MCF 10A (cell line): ENCODE measurements at regions of chr1 and their contacts with region 1.

Region 1: GRCh38 chr1:206725109-206725963 is 40.6 kb downstream of the MAPKAPK2 start:
- DNase-seq: peak; percentile 78
- H3K4me3 Mint-ChIP-seq: no peak overlapping the region
- H3K27ac Mint-ChIP-seq: no peak overlapping the region
- H3K4me1 Mint-ChIP-seq: peaks cover 57% of the 10 kb centered on the region
- H3K27me3 Mint-ChIP-seq: no peaks in the 10 kb centered on the region
- CTCF ChIP-seq: peak; percentile 54

Region 2: GRCh38 chr1:206674745-206675175 is 50.6 kb before region 1 on chr1:
- CTCF ChIA-PET with region 1: interaction called, 47 read pairs
- POLR2A ChIA-PET with region 1: interaction called, 8 read pairs
- intact Hi-C with region 1: no loop called
- DNase-seq: peak; percentile 100
- H3K4me3 Mint-ChIP-seq: peak overlapping the region; percentile 48
- H3K27ac Mint-ChIP-seq: no peak overlapping the region
- H3K4me1 Mint-ChIP-seq: peaks cover 18% of the 10 kb centered on the region
- H3K27me3 Mint-ChIP-seq: no peaks in the 10 kb centered on the region
- CTCF ChIP-seq: no peak

Region 3: DNA sequence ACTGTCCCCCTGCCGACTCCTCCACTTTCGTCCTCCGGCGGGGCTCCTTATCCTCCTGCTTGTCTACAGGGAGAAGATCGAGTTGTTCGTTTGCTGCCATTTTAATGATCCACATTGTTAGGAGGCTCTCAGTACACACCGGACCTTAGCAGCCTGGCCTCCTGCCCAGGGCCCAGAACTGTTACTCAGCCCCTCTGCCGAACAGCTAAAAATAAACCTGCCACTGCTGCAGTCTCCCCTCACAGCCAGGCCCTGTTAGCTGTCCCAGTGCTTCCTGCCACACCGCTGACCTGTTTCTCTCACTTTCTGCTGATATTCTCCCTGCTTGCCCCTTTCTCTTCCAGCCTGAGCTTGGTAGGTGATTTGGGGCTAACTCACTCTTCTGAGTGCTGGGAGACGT is 32.3 kb before region 1 on chr1:
- CTCF ChIA-PET with region 1: interaction called, 79 read pairs
- POLR2A ChIA-PET with region 1: interaction called, 20 read pairs
- intact Hi-C with region 1: no loop called
- DNase-seq: no peak
- H3K4me3 Mint-ChIP-seq: no peak overlapping the region
- H3K27ac Mint-ChIP-seq: no peak overlapping the region
- H3K4me1 Mint-ChIP-seq: peaks cover 56% of the 10 kb centered on the region
- H3K27me3 Mint-ChIP-seq: no peaks in the 10 kb centered on the region
- CTCF ChIP-seq: no peak

Region 4: DNA sequence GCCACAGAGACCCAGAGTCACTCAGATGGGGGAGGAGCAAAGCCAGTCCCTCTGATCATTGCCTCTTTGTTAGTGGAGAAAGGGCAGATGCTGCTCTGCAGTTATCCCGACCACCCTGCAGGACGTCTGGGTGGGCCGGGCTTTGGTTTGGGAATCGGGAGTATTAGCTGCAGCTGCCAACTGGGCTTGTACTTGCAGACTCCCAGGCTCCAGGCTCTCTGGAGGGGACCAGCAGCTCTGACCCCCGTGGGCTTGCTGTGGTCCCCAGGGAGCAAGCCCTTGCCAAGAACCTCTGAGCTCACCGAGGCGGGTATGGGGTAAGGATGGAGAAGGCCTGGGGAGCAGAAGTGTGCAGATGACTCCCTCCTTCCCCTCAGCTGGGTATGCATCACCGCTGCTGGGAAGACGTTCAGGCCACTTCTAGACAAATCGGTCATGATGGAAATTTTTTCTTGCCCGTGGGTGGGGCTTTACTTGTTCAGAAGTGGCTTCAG is 19.0 kb before region 1 on chr1:
- CTCF ChIA-PET with region 1: interaction called, 158 read pairs
- POLR2A ChIA-PET with region 1: interaction called, 54 read pairs
- intact Hi-C with region 1: no loop called
- DNase-seq: no peak
- H3K4me3 Mint-ChIP-seq: no peak overlapping the region
- H3K27ac Mint-ChIP-seq: no peak overlapping the region
- H3K4me1 Mint-ChIP-seq: peaks cover 61% of the 10 kb centered on the region
- H3K27me3 Mint-ChIP-seq: no peaks in the 10 kb centered on the region
- CTCF ChIP-seq: no peak

Region 5: DNA sequence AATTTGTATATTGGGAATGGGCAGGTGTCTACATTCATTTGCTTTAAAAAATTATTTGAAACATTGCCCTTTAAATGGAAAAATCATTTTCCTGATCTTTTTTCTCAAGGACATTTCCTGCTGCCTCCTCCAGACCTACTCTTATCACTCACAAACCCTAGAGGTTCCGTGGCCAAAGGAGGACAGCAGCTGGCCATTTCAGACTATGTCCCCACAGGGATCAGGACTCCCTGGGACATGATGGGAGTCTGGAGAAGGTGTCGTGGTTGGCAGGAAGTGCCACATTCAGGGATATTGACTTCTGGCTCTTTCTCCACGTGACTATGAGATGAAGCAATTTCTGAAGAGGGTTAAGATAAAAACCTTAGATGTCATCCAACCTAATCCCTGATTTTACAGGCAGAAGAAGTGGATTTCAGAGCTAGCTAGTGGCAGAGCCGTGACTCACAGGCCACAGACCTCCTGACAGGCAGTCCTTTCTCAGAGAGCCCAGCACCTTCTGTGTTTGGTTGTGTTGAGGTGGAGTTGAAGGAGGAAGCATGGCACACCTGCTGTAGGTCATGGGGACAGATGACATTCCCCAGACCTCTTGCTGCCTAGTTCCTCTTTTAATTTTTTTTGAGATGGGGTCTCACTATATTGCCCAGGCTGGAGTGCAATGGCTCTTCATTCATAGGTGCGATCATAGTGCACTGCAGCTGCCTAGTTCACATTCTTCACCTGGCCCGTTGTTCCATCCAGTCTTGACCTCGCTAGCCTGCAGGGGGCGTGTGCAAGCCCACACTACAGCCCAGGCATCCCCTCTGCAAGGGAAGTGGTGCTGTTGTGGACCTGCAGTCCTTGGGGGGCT is 72.4 kb after region 1 on chr1:
- CTCF ChIA-PET with region 1: interaction called, 37 read pairs
- POLR2A ChIA-PET with region 1: no interaction called
- intact Hi-C with region 1: no loop called
- DNase-seq: peak; percentile 50
- H3K4me3 Mint-ChIP-seq: no peak overlapping the region
- H3K27ac Mint-ChIP-seq: no peak overlapping the region
- H3K4me1 Mint-ChIP-seq: no peaks in the 10 kb centered on the region
- H3K27me3 Mint-ChIP-seq: no peaks in the 10 kb centered on the region
- CTCF ChIP-seq: peak; percentile 68

Region 6: DNA sequence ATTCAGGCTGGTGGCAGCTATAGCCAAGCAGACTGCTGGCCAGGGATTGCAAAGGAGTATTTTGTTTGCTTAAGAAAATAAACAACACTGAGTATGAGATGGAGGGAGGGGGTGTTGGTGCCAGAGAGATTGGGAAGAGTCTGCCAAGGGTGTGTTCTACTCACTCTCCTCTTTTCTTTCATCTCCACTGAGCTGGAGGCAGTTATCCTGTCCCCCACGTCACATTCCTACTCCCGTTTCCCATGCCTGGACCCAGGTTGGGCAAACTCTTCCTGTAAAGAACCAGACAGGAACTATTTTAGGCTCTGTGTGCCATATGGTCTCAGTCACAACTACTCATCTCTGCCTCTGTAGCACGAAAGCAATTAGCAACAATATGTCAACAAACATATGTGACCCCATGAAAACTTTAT is 170.5 kb after region 1 on chr1:
- CTCF ChIA-PET with region 1: interaction called, 24 read pairs
- POLR2A ChIA-PET with region 1: interaction called, 5 read pairs
- intact Hi-C with region 1: no loop called
- DNase-seq: peak; percentile 99
- H3K4me3 Mint-ChIP-seq: peak overlapping the region; percentile 2
- H3K27ac Mint-ChIP-seq: peak overlapping the region; percentile 89
- H3K4me1 Mint-ChIP-seq: peaks cover 71% of the 10 kb centered on the region
- H3K27me3 Mint-ChIP-seq: no peaks in the 10 kb centered on the region
- CTCF ChIP-seq: no peak